GM10248 (cell line): ENCODE measurements at regions of chr12 and their contacts with region 1.

Region 1: DNA sequence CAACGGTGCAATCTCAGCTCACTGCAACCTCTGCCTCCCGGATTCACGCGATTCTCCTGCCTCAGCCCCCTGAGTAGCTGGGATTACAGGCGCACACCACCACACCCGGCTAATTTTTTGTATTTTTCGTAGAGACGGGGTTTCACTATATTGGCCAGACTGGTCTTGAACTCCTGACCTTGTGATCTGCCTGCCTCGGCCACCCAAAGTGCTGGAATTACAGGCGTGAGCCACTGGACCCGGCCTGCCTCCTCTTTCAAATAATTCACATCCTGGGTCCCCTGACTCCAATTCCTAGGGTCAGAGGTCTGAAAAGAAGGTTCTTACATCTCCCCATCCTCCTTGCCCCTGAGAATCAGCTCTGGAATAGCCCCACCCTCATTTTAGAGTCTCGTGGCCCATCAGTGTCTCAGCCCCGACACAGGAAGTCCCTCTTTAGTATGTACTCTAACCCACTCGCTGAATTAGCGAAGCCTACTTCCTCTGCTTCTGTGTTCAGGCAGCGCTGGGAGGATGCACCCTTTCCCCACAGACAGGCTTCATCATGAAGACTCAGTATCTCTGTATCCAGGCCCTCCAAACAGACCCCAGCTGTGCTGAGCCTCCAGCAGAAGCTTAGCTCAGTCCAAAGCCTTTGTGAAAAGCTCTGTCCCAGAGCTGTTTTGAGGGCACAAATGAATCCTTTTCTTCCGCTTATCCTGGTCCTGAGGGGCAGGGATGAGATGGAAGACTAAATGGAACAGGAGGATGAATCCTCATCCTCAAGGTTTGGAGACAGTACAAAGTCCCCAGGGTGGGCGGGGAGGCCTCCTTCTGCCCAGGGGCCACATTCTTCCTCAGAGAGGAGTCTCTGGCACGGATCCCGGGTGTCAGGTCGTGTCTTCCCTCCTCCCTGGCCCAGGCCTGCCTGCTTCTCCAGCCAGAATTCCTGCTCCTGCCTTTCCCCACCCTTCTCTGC is 3.5 kb downstream of the LPAR5 start:
- DNase-seq: peak; percentile 71
- CTCF ChIP-seq: no peak

Region 2: GRCh38 chr12:6620137-6620884 is 12.0 kb before region 1 on chr12:
- CTCF ChIA-PET with region 1: interaction called, 57 read pairs
- POLR2A ChIA-PET with region 1: interaction called, 7 read pairs
- DNase-seq: no peak
- CTCF ChIP-seq: peak; percentile 19